ENCODE measurements at regions of chr11 and their contacts with region 1.

Region 1: DNA sequence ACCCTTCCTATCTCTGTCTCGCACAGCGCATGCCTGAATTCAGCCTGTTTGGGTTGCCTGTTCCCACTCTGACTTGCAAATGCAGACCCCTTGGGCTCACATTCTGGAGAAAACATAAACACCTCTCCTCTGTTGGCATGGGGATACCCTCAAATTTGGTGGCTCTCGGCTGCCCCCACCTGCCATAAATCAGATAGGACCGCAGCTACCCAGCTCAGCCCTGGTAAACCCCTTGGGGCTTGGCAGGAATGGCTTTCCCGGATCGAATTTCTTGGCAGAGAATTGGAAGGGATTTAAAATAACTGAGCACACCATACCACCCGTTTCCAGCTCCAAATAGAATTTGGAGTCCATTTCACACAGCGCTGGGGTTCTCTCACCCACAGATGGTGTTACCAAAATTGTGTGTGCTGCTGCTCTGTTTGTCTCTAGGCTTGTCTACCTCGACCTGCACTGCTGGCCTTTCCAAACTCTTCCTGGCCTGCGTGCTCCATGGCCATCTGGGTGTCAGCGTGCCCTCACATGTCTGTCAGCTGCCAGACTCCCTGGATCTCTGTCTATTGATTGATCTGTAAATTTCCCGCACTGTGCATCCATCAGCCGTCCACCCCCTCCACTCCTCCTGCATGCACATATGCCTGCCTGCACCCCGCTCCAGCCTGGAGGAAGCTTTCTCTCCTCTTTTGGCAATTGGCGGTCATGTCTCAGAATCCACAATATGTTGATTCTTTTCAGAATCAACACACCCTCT is 134.0 kb downstream of the NTM start:
- DNase-seq: no peak
- ATAC-seq: peak in 3 of 4 donors; percentile 51 to 74 (median 67)
- H3K4me3 ChIP-seq: no peak overlapping the region
- H3K27ac ChIP-seq: no peak overlapping the region
- H3K4me1 ChIP-seq: no peaks in the 10 kb centered on the region
- H3K27me3 ChIP-seq: peaks cover 0 to 22% (median 3%) of the 10 kb centered on the region in 9 donors
- CTCF ChIP-seq: peak in 8 of 12 donors; percentile 13 to 31 (median 25)
- POLR2A ChIP-seq: no peak

Region 2: DNA sequence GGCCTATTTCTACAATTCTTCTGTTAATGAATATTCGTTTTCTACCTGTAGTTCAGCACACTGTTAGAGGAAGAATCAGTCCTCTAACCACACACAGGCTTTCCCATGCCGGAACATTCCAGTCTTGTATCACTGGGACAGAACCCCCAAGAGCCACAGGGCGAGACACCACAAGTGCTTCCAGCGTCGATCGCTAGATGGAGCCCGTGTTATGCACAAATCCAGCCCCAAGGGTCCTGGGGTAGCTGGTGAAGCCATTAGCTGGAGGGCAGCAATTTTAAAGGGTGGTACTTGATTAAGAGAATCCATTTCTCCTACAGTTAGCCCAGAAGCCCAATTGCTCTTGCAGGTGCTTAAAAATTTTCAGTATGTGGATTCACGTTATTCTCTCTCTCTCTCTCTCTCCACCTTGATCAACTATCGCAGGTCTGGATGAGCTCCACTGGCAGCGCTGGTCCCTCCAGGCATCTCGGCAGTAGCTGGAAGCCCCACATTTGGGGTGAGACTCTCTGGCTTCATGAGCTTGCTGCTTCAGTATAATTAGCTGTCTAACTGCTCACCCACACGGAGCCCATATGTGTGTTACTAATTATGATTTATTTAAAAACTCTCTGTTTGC is 439.9 kb before region 1 on chr11:
- intact Hi-C with region 1: loop called in 2 of 10 experiments (anchors 5 kb)
- DNase-seq: peak in 4 of 5 donors; percentile 20 to 49 (median 41)
- ATAC-seq: peak in 3 of 4 donors; percentile 53 to 83 (median 71)
- H3K4me3 ChIP-seq: no peak overlapping the region
- H3K27ac ChIP-seq: no peak overlapping the region
- H3K4me1 ChIP-seq: no peaks in the 10 kb centered on the region
- H3K27me3 ChIP-seq: peaks cover 0 to 34% (median 5%) of the 10 kb centered on the region in 9 donors
- CTCF ChIP-seq: peak; percentile 52 to 85 (median 74)
- POLR2A ChIP-seq: no peak

Region 3: DNA sequence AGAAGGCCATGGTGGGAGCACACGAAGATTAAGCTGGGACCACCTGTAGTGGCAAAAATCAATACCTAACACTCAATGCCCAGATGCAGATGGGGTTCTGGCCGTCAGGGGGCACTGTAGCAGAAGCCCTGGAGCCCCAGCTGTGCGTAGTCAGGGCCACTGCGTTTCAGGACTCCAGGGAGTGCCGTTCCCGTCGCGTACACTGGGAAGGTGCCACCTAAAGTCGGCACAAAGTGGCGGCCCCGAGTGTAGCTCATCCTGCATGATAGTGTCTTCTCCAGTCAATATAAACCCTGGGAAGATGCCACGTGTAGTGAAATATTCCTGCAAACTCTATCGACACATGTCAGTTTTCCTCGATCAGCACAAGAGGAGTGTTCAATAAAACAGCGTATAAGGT is 257.7 kb before region 1 on chr11:
- intact Hi-C with region 1: loop called in 2 of 10 experiments (anchors 5 to 10 kb)
- DNase-seq: peak in 2 of 5 donors; percentile 44 to 45
- ATAC-seq: peak in 3 of 4 donors; percentile 71 to 82 (median 77)
- H3K4me3 ChIP-seq: no peak overlapping the region
- H3K27ac ChIP-seq: no peak overlapping the region
- H3K4me1 ChIP-seq: peaks cover 0 to 5% (median 0%) of the 10 kb centered on the region in 12 donors
- H3K27me3 ChIP-seq: peaks cover 0 to 32% (median 0%) of the 10 kb centered on the region in 9 donors
- CTCF ChIP-seq: peak in 11 of 12 donors; percentile 21 to 58 (median 46)
- POLR2A ChIP-seq: no peak

Region 4: GRCh38 chr11:131408025-131408640 is 96.2 kb before region 1 on chr11:
- intact Hi-C with region 1: loop called in 1 of 10 experiments (anchors 10 kb)
- DNase-seq: peak in 1 of 5 donors; percentile 35
- ATAC-seq: peak in 2 of 4 donors; percentile 36 to 64
- H3K4me3 ChIP-seq: no peak overlapping the region
- H3K27ac ChIP-seq: no peak overlapping the region
- H3K4me1 ChIP-seq: no peaks in the 10 kb centered on the region
- H3K27me3 ChIP-seq: peaks cover 0 to 13% (median 0%) of the 10 kb centered on the region in 9 donors
- CTCF ChIP-seq: peak in 10 of 12 donors; percentile 24 to 46 (median 35)
- POLR2A ChIP-seq: no peak